ENCODE measurements at regions of chr10 and their contacts with region 1.

Region 1: GRCh38 chr10:112471878-112472487 is 25.0 kb downstream of the VTI1A start:
- DNase-seq: peak; percentile 57
- H3K27ac ChIP-seq: no peak overlapping the region
- CTCF ChIP-seq: peak; percentile 83

Region 2: GRCh38 chr10:112151524-112152039 is 320.4 kb before region 1 on chr10:
- CTCF ChIA-PET with region 1: no interaction called
- POLR2A ChIA-PET with region 1: no interaction called
- DNase-seq: no peak
- H3K27ac ChIP-seq: no peak overlapping the region
- CTCF ChIP-seq: no peak

Region 3: DNA sequence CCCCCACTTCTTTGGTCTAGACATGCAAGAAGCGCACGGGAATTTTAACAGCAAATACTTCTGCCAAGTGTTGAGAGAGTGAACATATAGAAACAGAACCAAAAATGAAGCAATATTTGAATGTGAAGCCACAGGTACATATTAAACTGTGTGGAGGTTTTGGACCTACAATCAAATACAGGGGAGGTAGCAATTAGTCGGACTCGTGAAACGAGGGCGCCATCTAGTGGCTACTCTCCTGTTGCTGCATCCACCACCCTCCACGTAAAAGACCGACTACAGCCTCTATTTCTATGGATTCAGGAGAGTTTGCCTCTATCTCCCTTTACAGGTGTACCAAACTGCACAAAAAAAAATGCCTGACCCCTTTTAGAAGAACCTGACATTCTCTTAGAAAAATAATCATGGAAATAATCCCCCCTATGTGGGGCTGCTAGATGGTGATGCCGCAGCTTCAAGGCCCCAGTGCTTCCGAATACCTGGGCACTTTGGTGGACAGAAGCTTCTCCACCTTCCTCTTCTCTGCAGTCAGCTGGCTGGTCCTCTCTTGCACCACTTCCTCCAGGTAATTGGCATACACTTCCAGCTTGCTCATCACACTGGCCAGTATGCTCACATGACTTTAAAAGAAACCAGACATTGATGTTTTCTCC is 157.0 kb before region 1 on chr10:
- CTCF ChIA-PET with region 1: interaction called, 16 read pairs
- POLR2A ChIA-PET with region 1: no interaction called
- DNase-seq: peak; percentile 86
- H3K27ac ChIP-seq: no peak overlapping the region
- CTCF ChIP-seq: peak; percentile 88